ENCODE measurements at regions of chr3 and their contacts with region 1.

Region 1: GRCh38 chr3:124599779-124600609 is 130.3 kb upstream of the UMPS start:
- DNase-seq: peak in 3 of 5 donors; percentile 35 to 37 (median 36)
- ATAC-seq: peak; percentile 76 to 85 (median 83)
- H3K4me3 ChIP-seq: no peak overlapping the region
- H3K27ac ChIP-seq: peak overlapping the region; percentile 61 to 93 (median 78)
- H3K4me1 ChIP-seq: peaks cover 7 to 86% (median 41%) of the 10 kb centered on the region in 12 donors
- H3K27me3 ChIP-seq: no peaks in the 10 kb centered on the region
- CTCF ChIP-seq: no peak
- POLR2A ChIP-seq: no peak

Region 2: DNA sequence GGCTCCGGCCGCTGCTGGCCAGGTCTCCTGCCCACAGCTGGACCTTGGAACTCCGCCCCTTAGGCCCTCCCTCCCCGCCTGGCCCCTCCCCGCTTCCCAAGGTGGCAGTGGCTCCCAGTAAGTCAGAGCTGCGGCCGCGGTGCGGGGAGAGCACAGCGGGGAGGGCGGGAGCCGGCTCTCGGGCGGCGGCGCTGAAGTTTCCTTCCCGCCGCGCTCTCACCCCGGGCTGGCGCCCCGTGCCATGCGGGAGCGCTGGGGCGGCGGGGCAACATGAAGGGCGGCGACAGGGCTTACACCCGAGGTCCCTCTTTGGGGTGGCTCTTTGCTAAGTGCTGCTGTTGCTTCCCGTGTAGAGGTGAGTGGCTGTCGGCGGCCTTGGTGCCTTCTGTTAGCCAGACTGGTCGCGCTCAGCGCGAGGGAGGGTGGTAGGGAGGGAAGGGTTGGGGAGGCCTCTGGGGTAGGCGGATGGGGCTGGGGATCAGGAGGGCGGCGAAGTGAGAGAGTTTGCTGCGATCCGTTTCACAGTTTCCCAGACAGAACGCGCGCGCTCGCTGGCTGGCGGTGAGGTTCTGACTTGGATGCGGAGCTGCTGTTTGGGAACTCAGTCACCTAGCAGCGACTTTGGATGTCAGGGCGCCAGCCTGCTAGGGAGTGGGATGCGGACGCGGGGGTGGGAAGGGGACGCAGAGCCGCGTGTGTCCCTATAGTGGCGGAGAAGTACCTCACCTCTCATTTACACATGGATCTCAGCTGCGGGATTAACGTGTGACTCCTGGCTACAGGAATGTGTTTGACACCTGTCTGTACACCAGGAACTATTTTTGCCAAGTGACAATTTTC is 15.2 kb before region 1 on chr3:
- intact Hi-C with region 1: loop called in 1 of 10 experiments (anchors 2 kb)
- DNase-seq: peak; percentile 80 to 89 (median 84)
- ATAC-seq: peak; percentile 80 to 96 (median 93)
- H3K4me3 ChIP-seq: peak overlapping the region; percentile 33 to 81 (median 64)
- H3K27ac ChIP-seq: peak overlapping the region; percentile 0 to 94 (median 84)
- H3K4me1 ChIP-seq: peaks cover 0 to 37% (median 18%) of the 10 kb centered on the region in 12 donors
- H3K27me3 ChIP-seq: peaks cover 0 to 16% (median 0%) of the 10 kb centered on the region in 9 donors
- CTCF ChIP-seq: no peak
- POLR2A ChIP-seq: peak; percentile 54 to 88

Region 3: GRCh38 chr3:124620600-124621063 is 20.6 kb after region 1 on chr3:
- intact Hi-C with region 1: loop called in 1 of 10 experiments (anchors 2 kb)
- DNase-seq: peak in 4 of 5 donors; percentile 32 to 67 (median 38)
- ATAC-seq: peak; percentile 24 to 85 (median 75)
- H3K4me3 ChIP-seq: no peak overlapping the region
- H3K27ac ChIP-seq: peak overlapping the region in 10 of 12 donors; percentile 12 to 89 (median 60)
- H3K4me1 ChIP-seq: peaks cover 0 to 48% (median 20%) of the 10 kb centered on the region in 12 donors
- H3K27me3 ChIP-seq: no peaks in the 10 kb centered on the region
- CTCF ChIP-seq: peak in 2 of 12 donors; percentile 15 to 28
- POLR2A ChIP-seq: no peak

Region 4: GRCh38 chr3:124741027-124741426 is 141.0 kb after region 1 on chr3:
- intact Hi-C with region 1: no loop called
- DNase-seq: no peak
- ATAC-seq: peak in 1 of 4 donors; percentile 50
- H3K4me3 ChIP-seq: no peak overlapping the region
- H3K27ac ChIP-seq: no peak overlapping the region
- H3K4me1 ChIP-seq: peaks cover 0 to 6% (median 0%) of the 10 kb centered on the region in 12 donors
- H3K27me3 ChIP-seq: no peaks in the 10 kb centered on the region
- CTCF ChIP-seq: no peak
- POLR2A ChIP-seq: no peak